Activated naive CD8-positive, alpha-beta T cell treated with anti-CD3 and anti-CD28 coated beads, Interleukin-2, amount 10 ng/mL, durations not matched to agents 7 days and 5 days (primary cell): ENCODE measurements at regions of chr12 and their contacts with region 1.

Region 1: DNA sequence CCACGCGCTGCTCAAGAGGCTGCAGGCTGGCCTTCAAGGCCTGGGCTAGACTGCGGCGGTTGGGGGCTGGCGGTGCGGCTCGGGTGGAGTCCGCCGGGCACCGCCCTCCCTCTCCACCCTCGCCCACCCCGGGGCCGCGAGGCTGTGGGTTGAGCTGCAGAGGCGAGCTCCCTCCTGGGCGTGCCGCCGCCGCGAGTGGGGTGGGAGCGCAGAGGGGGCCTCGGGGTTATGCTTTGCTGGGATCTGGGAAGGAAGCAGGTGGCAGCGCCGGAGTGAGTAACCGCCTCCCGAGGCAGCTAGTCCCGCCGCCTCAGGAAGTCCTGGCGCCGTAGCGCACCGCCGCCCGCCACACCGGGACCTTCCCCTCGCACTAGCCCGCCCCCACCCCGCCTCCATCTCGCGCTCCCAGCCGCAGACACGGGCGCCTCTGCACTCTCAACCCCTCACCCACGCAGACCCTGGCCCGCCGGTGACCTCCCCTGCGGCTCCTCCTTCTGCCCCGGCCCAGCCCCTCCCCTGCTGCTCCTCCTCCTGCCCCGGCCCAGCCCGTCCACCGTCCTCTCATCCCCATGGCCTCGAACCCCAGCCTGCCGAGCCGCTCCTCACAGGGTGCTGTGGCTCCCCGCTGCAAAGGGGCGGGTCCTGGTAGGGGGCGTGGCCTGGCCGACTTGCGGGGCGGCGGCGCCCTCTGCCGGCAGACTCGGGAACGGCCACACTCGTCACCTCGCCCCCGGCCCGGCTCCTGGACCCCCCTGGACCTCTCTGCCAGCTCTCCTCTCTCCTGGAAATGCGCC is 16.6 kb downstream of the TAMALIN start:
- DNase-seq: peak; percentile 97
- ATAC-seq: peak; percentile 55
- H3K4me3 Mint-ChIP-seq: peak overlapping the region; percentile 91
- H3K27ac Mint-ChIP-seq: peak overlapping the region; percentile 97
- H3K4me1 Mint-ChIP-seq: peaks cover 30% of the 10 kb centered on the region
- H3K27me3 Mint-ChIP-seq: no peaks in the 10 kb centered on the region

Region 2: GRCh38 chr12:51879102-51879501 is 144.3 kb before region 1 on chr12:
- POLR2A ChIA-PET with region 1: no interaction called
- DNase-seq: no peak
- ATAC-seq: no peak
- H3K4me3 Mint-ChIP-seq: no peak overlapping the region
- H3K27ac Mint-ChIP-seq: no peak overlapping the region
- H3K4me1 Mint-ChIP-seq: no peaks in the 10 kb centered on the region
- H3K27me3 Mint-ChIP-seq: peaks cover 12% of the 10 kb centered on the region

Region 3: DNA sequence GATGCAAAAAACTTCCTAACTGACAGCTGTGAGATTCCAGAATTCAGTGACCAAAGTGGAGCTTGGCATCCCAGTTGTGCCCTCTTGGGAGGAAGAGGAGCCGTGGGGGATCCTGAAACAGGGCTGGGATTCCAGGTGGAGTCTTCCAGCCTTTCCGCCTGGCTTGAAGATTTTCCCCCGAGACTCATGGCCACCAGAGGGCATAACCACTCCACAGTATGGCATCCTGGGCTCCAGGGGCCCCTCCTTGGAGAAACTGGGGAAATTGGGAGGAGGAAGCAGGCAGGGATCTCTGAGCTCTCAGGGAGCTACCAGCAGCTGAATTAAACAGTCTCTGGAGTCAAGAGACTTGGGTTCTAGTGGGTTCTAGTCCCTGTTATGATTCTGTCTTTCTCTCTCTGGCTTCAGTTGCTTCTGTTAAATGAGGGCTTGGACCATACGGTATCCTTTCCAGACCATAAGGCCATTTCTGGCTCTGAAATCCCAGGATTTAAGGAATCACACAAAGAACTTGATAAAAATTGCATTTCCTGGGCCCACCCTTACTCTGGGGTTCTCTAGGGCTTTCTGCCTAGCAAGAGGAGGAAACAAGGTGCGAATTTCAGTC is 19.2 kb before region 1 on chr12:
- POLR2A ChIA-PET with region 1: interaction called, 155 read pairs
- DNase-seq: no peak
- ATAC-seq: no peak
- H3K4me3 Mint-ChIP-seq: no peak overlapping the region
- H3K27ac Mint-ChIP-seq: no peak overlapping the region
- H3K4me1 Mint-ChIP-seq: peaks cover 24% of the 10 kb centered on the region
- H3K27me3 Mint-ChIP-seq: peaks cover 8% of the 10 kb centered on the region

Region 4: GRCh38 chr12:52050761-52051541 is 27.6 kb after region 1 on chr12 and contains the start of gene NR4A1:
- POLR2A ChIA-PET with region 1: interaction called, 28 read pairs
- DNase-seq: peak; percentile 100
- ATAC-seq: peak; percentile 80
- H3K4me3 Mint-ChIP-seq: peak within 1 kb of the TSS; percentile 99
- H3K27ac Mint-ChIP-seq: peak within 1 kb of the TSS; percentile 99
- H3K4me1 Mint-ChIP-seq: peaks cover 38% of the 10 kb centered on the region
- H3K27me3 Mint-ChIP-seq: peaks cover 2% of the 10 kb centered on the region
- total RNA-seq, gene NR4A1: 8.6 to 8.8 TPM

Region 5: GRCh38 chr12:52069327-52070184 is 46.2 kb after region 1 on chr12 and contains the start of gene ATG101:
- POLR2A ChIA-PET with region 1: interaction called, 20 read pairs
- DNase-seq: peak; percentile 91
- ATAC-seq: peak; percentile 94
- H3K4me3 Mint-ChIP-seq: peak within 1 kb of the TSS; percentile 94
- H3K27ac Mint-ChIP-seq: peak within 1 kb of the TSS; percentile 99
- H3K4me1 Mint-ChIP-seq: peaks cover 48% of the 10 kb centered on the region
- H3K27me3 Mint-ChIP-seq: peaks cover 3% of the 10 kb centered on the region
- total RNA-seq, gene ATG101: 25.2 to 28.8 TPM